ENCODE measurements at regions of chr20 and their contacts with region 1.

Region 1: DNA sequence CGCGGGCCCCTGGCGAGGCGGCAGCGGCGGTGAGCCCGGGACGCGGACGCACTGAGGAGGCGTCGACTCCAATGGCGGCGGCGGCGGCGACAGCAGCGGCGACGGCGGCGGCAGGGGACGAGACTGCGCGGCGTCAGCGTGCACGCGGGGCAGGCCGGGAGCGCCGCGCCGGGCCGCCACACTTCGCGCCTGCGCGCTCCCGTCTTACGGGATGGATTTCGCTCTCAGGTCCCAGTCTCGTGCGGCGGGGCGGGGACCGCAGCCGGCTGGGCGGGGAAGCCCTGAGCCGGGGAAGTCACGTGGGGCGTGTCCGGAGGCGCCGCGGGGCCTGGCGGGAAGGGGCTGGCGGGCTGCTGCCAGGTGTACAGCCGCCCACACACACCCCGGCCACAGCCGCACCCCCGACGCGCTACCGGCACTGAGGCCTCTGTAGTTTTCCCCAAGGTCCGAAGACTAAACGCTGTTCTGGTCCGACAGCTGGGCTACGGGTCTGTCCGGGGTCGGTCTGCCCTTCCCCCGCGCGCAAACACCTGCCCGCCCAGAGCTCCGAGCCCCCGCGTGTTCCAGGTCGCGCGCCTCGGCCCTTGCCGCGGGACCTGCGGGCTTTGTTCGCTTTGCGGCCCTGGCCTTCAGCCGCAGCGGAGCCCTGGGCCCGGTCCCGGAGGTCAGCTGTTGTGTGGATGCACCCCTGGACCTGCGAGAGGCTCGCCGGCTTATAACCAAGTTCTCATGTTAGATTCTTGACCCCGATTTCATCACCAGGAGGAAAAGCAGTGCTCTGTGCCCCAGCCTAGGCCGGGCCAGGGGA is at the start of gene YTHDF1:
- DNase-seq: peak; percentile 93 to 98 (median 96)
- ATAC-seq: peak; percentile 97
- H3K4me3 ChIP-seq: peak within 1 kb of the TSS; percentile 78
- H3K4me3 Mint-ChIP-seq: peak within 1 kb of the TSS; percentile 88 to 97 (median 92)
- H3K27ac ChIP-seq: peak within 1 kb of the TSS; percentile 95
- H3K27ac Mint-ChIP-seq: peak within 1 kb of the TSS; percentile 86 to 96 (median 91)
- H3K4me1 ChIP-seq: peaks cover 10 to 39% of the 10 kb centered on the region in 2 donors
- H3K4me1 Mint-ChIP-seq: peaks cover 34 to 49% (median 46%) of the 10 kb centered on the region in 7 donors
- H3K27me3 ChIP-seq: no peaks in the 10 kb centered on the region
- H3K27me3 Mint-ChIP-seq: peaks cover 0 to 6% (median 0%) of the 10 kb centered on the region in 5 donors
- total RNA-seq, gene YTHDF1: 35.9 to 52.1 (median 42.0) TPM

Region 2: DNA sequence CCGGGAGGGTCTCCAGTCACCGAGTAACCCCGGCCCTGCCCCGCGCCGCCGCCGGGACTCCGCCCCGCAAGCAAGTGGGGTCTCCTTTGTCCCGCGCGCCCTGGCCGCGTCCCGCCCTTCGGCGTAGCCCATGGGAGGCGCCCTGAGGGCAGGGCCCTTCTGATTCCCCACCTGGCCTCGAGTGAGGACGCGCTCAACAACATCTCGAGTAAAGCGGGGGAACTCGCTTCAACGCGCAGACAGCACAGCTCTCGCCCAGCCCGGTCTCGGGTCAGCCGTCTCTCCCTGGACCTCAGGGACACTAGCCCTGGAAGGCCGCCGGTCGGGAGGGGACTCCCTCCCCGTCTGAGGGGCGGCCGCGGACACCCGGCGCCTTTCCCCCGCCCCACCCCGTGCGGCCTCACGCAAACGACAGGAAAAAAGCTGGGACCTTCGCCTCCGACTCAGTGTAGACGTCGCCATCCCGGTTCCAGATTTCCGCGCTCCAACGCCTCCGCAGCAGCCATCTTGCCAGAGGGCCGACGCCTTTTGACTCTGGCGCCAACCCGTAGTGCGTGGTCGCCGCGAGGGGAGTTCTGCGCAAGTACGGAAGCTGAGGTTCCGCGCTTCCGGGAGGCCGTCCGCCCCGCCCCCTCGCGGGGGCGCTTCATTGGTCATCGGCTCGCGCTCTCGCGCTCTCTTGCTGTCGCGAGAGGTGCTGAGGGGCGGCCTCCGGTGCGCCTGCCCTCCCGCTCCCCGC is 278.7 kb before region 1 on chr20:
- CTCF ChIA-PET with region 1: no interaction called
- POLR2A ChIA-PET with region 1: no interaction called
- intact Hi-C with region 1: loop called in 1 of 2 experiments (anchors 5 kb)
- DNase-seq: peak; percentile 96 to 98 (median 97)
- ATAC-seq: peak; percentile 95
- H3K4me3 ChIP-seq: peak overlapping the region; percentile 94
- H3K4me3 Mint-ChIP-seq: peak overlapping the region in 6 of 10 donors; percentile 94 to 98 (median 96)
- H3K27ac ChIP-seq: peak overlapping the region; percentile 97
- H3K27ac Mint-ChIP-seq: peak overlapping the region; percentile 88 to 98 (median 95)
- H3K4me1 ChIP-seq: peaks cover 34 to 37% of the 10 kb centered on the region in 2 donors
- H3K4me1 Mint-ChIP-seq: peaks cover 26 to 51% (median 40%) of the 10 kb centered on the region in 7 donors
- H3K27me3 ChIP-seq: no peaks in the 10 kb centered on the region
- H3K27me3 Mint-ChIP-seq: no peaks in the 10 kb centered on the region

Region 3: GRCh38 chr20:63101781-63102719 is 114.2 kb before region 1 on chr20:
- CTCF ChIA-PET with region 1: no interaction called
- POLR2A ChIA-PET with region 1: no interaction called
- intact Hi-C with region 1: loop called (anchors 1 kb)
- DNase-seq: peak; percentile 53 to 84 (median 80)
- ATAC-seq: peak; percentile 76
- H3K4me3 ChIP-seq: peak overlapping the region; percentile 84
- H3K4me3 Mint-ChIP-seq: peak overlapping the region; percentile 86 to 95 (median 92)
- H3K27ac ChIP-seq: peak overlapping the region; percentile 88
- H3K27ac Mint-ChIP-seq: peak overlapping the region; percentile 90 to 99 (median 96)
- H3K4me1 ChIP-seq: no peaks in the 10 kb centered on the region
- H3K4me1 Mint-ChIP-seq: peaks cover 0 to 8% (median 5%) of the 10 kb centered on the region in 7 donors
- H3K27me3 ChIP-seq: no peaks in the 10 kb centered on the region
- H3K27me3 Mint-ChIP-seq: no peaks in the 10 kb centered on the region